Calu3 (cell line): ENCODE measurements at regions of chr11 and their contacts with region 1.

Region 1: GRCh38 chr11:61332797-61333549 is at the starts of genes DDB1 and TKFC:
- DNase-seq: peak; percentile 98
- H3K4me3 Mint-ChIP-seq: peak within 1 kb of the TSS; percentile 87
- H3K27ac Mint-ChIP-seq: peak within 1 kb of the TSS; percentile 90
- H3K4me1 Mint-ChIP-seq: peaks cover 13% of the 10 kb centered on the region
- H3K27me3 Mint-ChIP-seq: no peaks in the 10 kb centered on the region
- CTCF ChIP-seq: no peak
- total RNA-seq, gene DDB1: 165 and 193 TPM in 2 replicates
- total RNA-seq, gene TKFC: 61.1 and 79.9 TPM in 2 replicates

Region 2: DNA sequence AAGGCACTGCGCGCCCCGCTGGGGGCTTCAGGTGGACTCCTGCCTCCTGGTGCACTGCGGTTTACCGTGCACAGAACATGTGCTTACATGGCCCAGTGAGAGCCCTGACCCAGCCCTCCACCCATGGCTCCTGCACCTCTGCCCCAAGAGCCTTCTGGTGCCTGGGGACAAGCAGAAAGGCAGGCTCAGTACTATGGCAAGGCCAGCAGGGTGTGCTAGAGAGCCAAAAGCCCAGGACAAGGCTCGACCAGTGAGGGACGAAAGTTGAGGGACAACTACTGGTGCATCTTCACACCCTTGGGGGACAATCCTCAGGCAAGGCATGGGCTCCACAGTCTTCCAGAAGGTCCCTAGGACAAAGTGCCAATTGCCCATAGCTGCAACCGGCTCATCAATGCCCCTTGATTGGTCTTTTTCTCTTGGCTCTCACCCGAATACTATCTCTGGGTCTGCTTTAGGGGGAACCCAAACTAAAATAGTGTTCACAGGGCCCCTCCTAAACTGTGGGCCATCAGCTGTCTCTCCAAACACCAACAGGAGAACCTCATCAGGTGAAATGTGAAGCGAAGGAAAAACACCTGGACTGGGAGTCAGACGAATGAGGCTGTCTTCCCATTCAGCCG is 78.5 kb before region 1 on chr11:
- CTCF ChIA-PET with region 1: interaction called, 3 read pairs
- intact Hi-C with region 1: loop called (anchors 10 kb)
- DNase-seq: peak; percentile 74
- H3K4me3 Mint-ChIP-seq: no peak overlapping the region
- H3K27ac Mint-ChIP-seq: no peak overlapping the region
- H3K4me1 Mint-ChIP-seq: no peaks in the 10 kb centered on the region
- H3K27me3 Mint-ChIP-seq: peaks cover 59% of the 10 kb centered on the region
- CTCF ChIP-seq: peak; percentile 69

Region 3: GRCh38 chr11:61306221-61306620 is 26.8 kb before region 1 on chr11:
- CTCF ChIA-PET with region 1: no interaction called
- intact Hi-C with region 1: no loop called
- DNase-seq: no peak
- H3K4me3 Mint-ChIP-seq: no peak overlapping the region
- H3K27ac Mint-ChIP-seq: no peak overlapping the region
- H3K4me1 Mint-ChIP-seq: no peaks in the 10 kb centered on the region
- H3K27me3 Mint-ChIP-seq: no peaks in the 10 kb centered on the region
- CTCF ChIP-seq: no peak

Region 4: DNA sequence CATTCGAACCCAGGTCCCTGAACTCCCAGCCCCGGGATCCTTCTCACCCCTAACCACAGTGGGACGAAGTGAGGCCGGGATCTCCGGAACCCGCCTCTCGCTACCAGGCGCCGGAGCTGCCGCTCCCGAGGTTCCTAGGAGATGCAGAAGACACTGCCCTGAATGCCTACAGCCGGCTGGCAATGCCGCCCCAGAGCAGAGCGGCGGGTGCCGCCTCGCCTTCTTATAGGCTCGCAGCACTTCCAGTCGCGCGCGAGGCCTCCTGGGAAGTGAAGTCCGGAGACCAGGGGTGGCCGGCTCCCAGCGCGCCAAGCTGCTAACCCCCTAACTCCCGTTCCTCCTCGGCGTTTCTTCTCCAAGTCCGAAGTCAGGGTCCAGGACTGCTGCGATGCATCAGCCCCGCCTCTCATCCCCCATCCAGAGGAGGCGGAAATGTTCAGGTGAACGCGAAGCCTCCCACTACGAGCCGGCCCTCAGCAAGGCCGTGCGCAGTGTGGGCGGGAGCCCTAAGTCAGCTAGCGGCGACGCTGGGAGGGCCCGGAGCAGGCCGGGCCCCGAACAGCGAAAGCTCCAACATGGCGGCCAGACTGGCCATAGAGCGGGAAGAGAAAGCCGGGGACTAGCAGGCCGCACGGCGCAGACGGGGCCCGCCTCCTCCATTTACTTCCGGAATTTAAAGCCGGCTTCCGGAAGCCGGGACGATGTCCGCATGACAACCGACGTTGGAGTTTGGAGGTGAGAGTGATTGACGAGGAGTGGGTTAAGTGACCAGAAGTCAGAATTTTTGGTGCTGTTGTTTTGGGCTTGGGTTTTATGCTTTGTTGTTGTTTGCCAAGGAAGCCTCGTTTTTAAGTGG is 28.9 kb after region 1 on chr11 and contains the starts of genes CYB561A3 and TMEM138:
- CTCF ChIA-PET with region 1: interaction called, 23 read pairs
- intact Hi-C with region 1: no loop called
- DNase-seq: peak; percentile 92
- H3K4me3 Mint-ChIP-seq: peak within 1 kb of the TSS; percentile 91
- H3K27ac Mint-ChIP-seq: peak within 1 kb of the TSS; percentile 83
- H3K4me1 Mint-ChIP-seq: no peaks in the 10 kb centered on the region
- H3K27me3 Mint-ChIP-seq: no peaks in the 10 kb centered on the region
- CTCF ChIP-seq: no peak
- total RNA-seq, gene CYB561A3: 33.3 and 39.2 TPM in 2 replicates
- total RNA-seq, gene TMEM138: 45.7 and 51.6 TPM in 2 replicates

Region 5: DNA sequence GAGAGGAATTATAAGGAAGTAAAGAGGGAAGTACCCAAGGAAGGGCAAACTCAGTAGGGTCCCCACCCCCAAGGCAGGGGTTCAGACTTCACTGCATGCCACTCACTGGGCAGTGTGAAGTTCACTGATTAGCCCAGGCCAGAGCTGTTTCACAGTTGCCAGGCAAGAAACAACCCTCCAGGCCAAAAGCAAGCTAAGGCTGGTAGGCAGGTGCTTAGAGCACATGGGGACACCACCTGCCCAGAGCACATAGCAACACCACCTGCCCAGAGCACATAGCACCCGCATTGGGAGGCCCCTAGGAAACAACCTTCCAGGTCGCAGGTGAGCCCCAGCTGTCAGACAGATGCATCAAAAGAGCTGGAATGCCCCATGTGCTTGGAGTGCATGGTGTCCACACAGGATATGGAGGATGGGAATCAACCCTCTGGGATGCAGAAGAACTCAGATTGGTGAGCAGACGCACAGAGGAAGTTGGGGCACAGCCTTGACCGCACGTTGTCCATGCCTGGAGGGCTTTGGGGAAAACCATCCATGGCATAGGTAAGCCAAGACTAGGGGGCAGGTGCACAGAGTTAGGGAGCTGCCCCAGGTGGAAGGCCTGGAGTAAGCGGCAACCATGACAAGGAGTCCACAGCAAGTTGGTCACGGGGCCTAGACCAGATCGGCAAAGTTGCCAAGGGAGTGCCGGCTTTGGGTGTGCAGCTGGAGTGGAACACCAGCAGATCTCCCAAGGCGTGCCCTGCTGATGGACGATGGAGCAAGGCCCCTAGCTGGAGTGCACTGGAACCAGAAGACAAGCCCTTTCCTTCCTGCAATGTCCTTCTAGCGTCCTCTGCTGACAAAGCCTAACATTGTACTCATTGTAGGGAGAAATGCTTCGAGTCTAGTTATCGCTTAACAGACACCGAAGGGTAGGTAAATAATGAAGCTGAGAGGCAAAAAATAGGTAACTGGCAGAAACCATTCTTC is 51.6 kb after region 1 on chr11:
- CTCF ChIA-PET with region 1: interaction called, 64 read pairs
- intact Hi-C with region 1: loop called (anchors 1 kb)
- DNase-seq: no peak
- H3K4me3 Mint-ChIP-seq: no peak overlapping the region
- H3K27ac Mint-ChIP-seq: no peak overlapping the region
- H3K4me1 Mint-ChIP-seq: no peaks in the 10 kb centered on the region
- H3K27me3 Mint-ChIP-seq: no peaks in the 10 kb centered on the region
- CTCF ChIP-seq: no peak

Region 6: DNA sequence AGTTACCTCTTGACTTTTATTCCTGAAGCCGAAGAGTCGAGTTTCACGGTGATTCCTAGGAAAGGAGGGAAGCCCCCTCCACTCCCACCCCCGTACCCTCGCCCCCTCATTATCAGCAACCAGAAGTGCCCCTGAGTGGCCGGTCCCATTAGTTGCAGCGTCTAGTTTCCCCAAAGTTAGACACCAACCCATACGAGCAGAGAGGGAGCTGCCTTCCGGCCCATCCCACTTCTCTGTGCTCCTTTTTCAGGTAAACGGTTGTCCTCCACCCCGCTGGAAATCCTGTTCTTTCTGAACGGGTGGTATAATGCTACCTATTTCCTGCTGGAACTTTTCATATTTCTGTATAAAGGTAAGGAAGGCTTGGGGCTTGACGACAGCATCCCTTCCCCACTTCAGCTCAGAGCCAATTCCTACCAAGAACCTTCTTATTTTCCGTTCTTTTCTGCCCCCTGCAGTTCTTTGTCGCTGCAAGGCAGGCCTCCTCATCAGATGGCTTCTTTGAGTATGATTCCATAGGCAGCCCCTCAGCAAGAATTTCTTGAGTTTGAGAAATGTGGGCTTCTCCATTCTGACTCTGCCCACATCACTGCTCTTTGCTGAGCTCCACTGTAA is 60.1 kb after region 1 on chr11:
- CTCF ChIA-PET with region 1: interaction called, 20 read pairs
- intact Hi-C with region 1: no loop called
- DNase-seq: no peak
- H3K4me3 Mint-ChIP-seq: peak overlapping the region; percentile 96
- H3K27ac Mint-ChIP-seq: peak overlapping the region; percentile 95
- H3K4me1 Mint-ChIP-seq: peaks cover 18% of the 10 kb centered on the region
- H3K27me3 Mint-ChIP-seq: no peaks in the 10 kb centered on the region
- CTCF ChIP-seq: no peak

Region 7: GRCh38 chr11:61733120-61733978 is 400.4 kb after region 1 on chr11:
- CTCF ChIA-PET with region 1: no interaction called
- intact Hi-C with region 1: no loop called
- DNase-seq: peak; percentile 87
- H3K4me3 Mint-ChIP-seq: no peak overlapping the region
- H3K27ac Mint-ChIP-seq: peak overlapping the region; percentile 78
- H3K4me1 Mint-ChIP-seq: peaks cover 33% of the 10 kb centered on the region
- H3K27me3 Mint-ChIP-seq: no peaks in the 10 kb centered on the region
- CTCF ChIP-seq: peak; percentile 94